ENCODE measurements at regions of chr12 and their contacts with region 1.

Region 1: DNA sequence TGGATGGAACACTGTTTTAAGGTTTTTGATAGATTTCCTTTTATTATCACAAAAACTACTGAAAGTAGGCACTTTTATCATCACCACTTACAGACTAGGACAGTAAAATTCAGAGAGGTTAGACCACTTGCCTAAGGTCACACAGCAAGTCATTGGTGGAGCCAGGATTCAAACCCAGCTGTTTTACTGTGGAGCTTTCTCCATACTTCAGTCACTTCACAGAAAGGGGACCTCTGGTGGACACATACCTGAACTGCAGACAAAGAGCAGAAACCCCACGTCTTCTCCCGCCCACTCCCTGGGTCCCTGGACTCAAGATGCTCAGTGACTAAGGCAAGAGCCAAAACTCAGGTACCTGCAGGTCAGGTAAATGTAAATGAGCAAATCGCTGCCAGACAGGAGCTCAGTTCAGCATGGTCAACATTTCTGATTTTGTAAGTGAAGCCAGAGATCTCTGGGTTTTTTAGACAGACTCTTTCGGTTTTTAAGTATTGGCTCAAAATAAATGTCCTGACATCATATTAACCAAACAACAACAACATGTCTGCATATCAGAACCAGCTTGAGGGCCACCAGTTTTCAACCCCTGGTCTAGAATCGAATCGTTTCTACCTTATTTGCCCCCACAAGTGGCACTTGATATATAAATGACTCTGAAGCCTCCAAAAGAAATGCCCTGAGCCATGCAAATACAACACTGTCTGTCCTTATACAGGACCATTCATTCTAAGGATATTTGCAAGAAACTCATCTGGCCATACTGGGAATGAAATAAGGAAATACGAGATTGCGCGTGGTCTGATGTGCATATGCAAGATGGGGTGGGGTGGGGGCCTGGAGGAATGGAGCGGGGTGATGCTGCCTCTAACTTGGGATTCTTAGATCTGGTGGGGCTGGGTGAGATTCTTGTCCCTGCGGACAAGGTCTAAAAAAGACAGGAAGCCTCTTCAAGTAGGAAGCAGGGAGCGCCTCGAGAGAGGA is 110.9 kb downstream of the KSR2 start:
- DNase-seq: no peak
- H3K4me3 ChIP-seq: no peak overlapping the region
- CTCF ChIP-seq: peak; percentile 50

Region 2: DNA sequence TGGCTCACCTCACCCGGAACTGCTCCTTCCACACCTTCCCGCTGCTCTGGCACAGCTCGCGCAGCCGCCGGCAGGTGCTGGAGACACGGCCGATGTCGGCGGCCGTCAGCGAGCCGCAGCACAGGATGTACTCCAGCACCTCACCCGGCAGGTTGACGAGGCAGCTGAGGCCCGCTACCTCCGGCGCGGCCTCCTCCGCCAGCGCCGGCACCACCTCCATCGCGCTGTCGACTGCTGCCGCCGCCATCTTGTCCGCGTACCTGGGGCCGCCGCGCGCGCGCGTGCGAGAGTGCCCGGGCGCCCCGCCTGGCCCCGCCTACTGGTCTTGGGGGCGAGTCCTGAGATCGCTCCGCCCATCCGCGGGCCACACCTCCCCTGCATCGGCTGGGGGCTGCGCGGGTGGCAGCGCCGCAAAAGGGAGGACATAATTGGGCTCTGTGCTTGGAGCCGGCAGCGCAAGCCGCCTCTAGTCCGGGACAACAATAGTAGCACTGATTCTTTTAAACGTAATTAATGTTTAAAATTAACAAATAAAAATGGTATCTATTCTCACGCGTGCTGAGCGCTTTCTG is 667.6 kb before region 1 on chr12 and contains the start of gene FBXO21:
- CTCF ChIA-PET with region 1: interaction called, 14 read pairs
- POLR2A ChIA-PET with region 1: no interaction called
- DNase-seq: peak; percentile 7
- H3K4me3 ChIP-seq: peak within 1 kb of the TSS; percentile 95
- CTCF ChIP-seq: no peak

Region 3: GRCh38 chr12:117212563-117213190 is 645.2 kb before region 1 on chr12:
- CTCF ChIA-PET with region 1: interaction called, 163 read pairs
- POLR2A ChIA-PET with region 1: no interaction called
- DNase-seq: peak; percentile 36
- H3K4me3 ChIP-seq: no peak overlapping the region
- CTCF ChIP-seq: peak; percentile 79

Region 4: DNA sequence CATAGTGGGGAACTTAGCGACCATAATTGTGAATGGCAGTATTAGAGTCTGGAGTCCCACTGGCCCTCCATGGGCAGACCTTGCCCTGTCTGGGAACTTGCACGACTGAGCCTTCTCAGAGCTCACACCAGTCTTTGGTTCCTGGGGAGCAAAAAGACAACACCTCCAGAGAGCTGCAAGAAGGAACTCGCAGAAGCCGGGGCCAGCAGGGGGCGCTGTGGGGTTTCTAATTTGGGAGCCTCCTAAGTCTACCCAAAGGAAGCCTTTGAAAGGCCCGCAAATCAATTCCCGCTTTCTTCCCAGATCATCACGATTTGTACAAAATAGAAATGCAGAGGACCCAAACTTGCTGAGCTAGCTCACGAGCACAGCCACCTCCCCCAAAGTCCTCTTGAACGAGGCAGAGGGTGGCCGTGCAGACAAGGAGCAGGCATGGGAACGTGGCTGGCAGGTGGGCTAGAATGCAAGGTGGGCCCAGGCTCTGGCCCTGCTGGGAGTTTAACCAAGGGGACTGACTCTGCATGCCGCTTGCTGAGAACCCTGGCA is 621.4 kb before region 1 on chr12:
- CTCF ChIA-PET with region 1: interaction called, 276 read pairs
- POLR2A ChIA-PET with region 1: no interaction called
- DNase-seq: no peak
- H3K4me3 ChIP-seq: no peak overlapping the region
- CTCF ChIP-seq: peak; percentile 64

Region 5: DNA sequence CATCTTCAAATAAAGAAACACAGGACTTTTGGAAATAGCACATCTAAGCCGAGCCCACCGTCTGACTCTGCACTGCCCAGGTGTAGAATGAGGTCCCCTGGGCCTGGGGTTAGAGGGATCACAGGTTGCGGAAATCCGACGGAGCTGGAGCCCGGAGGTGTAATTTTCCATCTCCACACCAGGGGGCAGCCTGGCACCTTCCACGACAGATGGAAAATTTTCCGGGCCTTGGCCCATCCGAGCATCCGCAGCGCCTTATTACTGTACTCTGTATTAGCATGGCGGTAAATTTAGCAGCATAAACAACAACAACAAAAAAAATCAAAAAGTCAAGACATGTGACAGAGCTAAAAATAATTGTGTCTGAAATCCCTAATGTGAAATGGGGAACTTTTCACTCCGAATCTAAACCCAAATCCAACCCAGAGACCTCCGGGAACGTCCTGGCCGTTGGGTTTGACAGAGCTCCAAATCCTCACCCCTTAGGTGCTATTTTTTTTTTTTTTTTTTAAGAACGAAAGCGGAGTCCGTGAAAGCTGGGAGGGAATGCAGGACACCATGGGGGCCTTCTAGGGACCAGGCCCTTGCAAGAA is 17.0 kb after region 1 on chr12:
- CTCF ChIA-PET with region 1: interaction called, 89 read pairs
- POLR2A ChIA-PET with region 1: no interaction called
- DNase-seq: no peak
- H3K4me3 ChIP-seq: no peak overlapping the region
- CTCF ChIP-seq: peak; percentile 83

Region 6: GRCh38 chr12:117884161-117884560 is 26.2 kb after region 1 on chr12:
- CTCF ChIA-PET with region 1: interaction called, 11 read pairs
- POLR2A ChIA-PET with region 1: no interaction called
- DNase-seq: no peak
- H3K4me3 ChIP-seq: no peak overlapping the region
- CTCF ChIP-seq: no peak

Region 7: DNA sequence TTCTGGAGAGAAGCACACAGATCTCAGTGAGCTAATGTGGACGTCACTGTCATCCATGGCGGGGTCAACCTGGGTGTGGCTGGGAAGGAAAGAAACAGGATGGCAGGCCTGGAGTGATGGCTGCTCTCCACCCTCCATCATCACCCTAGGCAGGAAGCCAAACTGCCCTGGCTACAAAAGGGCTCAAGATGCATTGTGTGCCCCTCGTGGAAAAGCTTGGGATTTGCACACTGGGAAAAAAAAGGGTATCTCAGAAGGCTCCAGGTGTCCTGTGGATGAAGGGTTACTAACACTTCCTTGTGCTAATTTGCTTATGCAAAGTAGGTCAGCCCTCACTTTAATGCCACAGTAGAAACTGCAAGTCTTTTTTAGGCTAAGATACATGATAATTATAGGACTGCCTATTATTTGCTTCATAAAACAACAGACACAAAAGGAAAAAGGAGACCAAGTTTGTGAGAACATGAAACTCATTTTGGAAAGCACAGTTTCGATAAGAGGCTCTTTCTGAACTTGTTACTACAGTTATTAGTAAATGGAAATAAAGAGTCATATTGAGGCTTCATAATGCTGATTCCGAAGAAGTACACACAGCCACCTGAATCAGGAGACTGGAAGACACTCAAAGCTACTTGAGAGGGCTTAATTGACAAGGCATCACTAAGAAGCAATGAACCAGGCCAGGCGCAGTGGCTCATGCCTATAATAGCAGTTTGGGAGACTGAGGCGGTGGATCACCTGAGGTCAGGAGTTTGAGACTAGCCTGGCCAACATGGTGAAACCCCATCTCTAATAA is 177.5 kb after region 1 on chr12:
- CTCF ChIA-PET with region 1: interaction called, 30 read pairs
- POLR2A ChIA-PET with region 1: no interaction called
- DNase-seq: no peak
- H3K4me3 ChIP-seq: no peak overlapping the region
- CTCF ChIP-seq: peak; percentile 13

Region 8: DNA sequence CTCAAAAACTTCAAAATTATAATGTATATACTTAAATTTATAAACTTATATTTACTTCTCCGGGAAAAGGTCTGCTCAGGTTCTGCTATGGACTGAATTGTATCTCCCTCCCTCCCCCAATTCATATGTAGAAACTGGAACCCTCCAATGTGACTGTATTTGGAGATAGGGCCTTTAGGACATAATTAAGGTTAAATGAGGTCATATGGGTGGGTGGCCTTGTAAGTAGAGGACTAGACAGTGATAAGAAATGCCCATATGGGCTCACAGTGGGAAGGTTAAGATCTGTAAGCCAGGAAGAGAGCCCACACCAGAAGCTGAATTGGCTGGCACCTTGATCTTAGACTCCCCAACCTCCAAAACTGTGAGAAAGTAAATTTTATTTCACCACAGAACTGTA is 430.3 kb after region 1 on chr12:
- CTCF ChIA-PET with region 1: no interaction called
- POLR2A ChIA-PET with region 1: no interaction called
- DNase-seq: no peak
- H3K4me3 ChIP-seq: no peak overlapping the region
- CTCF ChIP-seq: no peak